ENCODE measurements at regions of chr22 and their contacts with region 1.

Region 1: DNA sequence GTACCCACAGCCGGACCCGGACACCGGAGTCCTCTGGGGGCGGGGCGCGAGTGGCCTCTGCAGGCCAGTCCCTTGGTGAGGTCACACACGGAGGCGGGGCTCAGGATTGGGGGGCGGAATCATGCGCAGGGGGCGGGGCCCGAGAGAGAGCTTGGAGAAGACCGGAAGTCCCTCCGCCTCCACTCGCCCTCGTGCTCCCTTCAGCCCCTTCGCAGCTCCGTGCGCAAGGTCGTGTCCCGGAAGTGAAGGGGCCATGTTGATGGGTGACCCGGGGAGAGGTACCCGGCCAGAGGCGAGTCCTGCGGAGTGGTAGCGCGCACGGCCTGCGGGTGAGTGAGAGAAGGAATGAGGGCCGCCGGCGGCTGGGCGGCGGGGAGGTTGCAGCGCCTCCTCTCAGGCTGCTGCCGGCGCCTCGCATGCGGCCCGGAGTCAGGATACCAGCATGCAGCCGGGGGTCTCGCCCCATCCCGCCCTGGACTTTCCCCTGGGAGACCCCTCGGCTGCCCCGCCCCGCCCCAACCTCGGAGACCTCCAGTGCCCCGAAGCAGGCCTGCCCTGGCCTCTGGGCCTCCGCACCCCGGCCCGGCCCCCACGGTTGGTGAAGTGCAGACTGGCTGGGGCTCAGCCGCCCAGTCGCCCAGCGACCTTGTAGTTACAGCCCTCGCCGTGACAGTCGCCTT is at the start of gene MIEF1:
- DNase-seq: peak; percentile 98
- CTCF ChIP-seq: no peak

Region 2: DNA sequence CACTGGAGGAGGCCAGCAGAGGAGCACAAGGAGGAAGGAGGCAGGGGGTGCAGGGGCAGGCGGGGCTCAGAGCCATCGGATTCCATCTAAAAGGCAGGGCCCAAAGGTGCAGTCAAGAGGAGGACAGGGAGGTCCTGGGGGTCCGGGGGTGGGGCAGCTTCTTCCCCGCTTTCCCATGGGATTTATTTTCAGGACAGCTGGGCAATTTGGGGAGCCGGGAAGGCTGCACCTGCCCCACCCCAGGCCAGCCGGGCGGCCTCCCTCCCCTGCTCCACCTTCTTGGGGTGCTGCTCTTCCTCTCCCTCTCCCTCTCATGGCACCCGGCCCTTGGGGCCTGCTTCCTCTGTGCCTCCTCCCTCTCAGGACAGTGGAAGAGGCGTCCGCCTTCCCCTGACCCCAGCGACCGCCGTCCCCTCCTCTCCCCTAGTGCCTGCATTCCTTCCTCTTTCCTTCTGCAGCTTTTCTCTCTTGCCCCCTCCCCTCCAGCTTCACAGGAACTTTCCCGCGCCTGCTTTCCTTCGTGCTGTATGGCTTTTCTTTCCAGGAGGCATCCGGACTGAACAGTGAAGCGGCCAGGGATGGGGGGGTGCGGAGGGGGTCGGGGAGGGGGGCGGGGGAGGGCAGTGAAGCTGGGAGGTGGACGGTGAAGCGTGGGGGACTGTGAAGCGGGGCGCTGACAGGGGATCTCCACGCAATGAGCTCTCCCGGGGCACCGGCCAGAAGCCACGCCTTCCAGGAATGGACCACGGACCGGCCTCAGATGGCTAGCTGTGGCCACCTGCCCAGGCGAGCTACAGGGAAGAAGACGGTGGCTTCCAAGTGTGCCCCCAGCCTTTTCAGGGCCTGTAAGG is 378.3 kb before region 1 on chr22:
- CTCF ChIA-PET with region 1: no interaction called
- POLR2A ChIA-PET with region 1: no interaction called
- DNase-seq: peak; percentile 25
- CTCF ChIP-seq: no peak

Region 3: GRCh38 chr22:39364714-39365491 is 137.3 kb before region 1 on chr22:
- CTCF ChIA-PET with region 1: no interaction called
- POLR2A ChIA-PET with region 1: no interaction called
- DNase-seq: no peak
- CTCF ChIP-seq: no peak

Region 4: DNA sequence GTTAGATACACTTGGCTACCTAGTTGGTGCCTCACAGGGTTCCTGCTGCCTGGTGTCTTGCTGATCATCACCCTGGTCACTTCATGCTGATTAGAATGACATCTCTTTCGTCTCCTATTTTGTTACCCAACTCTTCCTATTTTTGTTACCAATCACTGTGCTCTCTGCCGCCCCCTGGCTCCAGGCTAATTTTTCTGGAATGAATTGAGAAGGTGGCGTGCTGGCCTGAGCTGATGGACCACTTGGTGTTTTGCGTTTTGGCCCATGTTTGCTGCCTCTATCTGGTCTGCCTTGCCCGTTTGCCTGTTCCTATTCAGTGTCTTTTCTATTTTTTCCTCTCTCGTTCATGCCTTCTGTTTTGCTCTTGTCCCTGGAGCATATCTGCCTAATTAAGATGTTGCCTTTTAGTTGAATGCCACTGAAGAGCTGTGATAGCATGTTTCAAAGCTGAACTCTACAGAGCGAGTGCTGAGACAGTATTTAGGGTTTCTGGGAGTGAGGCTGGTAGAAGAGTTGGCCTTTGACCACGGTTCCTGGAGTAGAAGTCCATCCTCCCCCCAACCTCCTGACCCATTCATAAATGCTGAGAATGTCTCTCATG is 12.2 kb after region 1 on chr22:
- CTCF ChIA-PET with region 1: interaction called, 166 read pairs
- POLR2A ChIA-PET with region 1: interaction called, 16 read pairs
- DNase-seq: no peak
- CTCF ChIP-seq: peak; percentile 77

Region 5: GRCh38 chr22:39520054-39520891 is 18.0 kb after region 1 on chr22 and contains the start of gene ATF4:
- CTCF ChIA-PET with region 1: interaction called, 166 read pairs
- POLR2A ChIA-PET with region 1: interaction called, 16 read pairs
- DNase-seq: peak; percentile 97
- CTCF ChIP-seq: no peak

Region 6: DNA sequence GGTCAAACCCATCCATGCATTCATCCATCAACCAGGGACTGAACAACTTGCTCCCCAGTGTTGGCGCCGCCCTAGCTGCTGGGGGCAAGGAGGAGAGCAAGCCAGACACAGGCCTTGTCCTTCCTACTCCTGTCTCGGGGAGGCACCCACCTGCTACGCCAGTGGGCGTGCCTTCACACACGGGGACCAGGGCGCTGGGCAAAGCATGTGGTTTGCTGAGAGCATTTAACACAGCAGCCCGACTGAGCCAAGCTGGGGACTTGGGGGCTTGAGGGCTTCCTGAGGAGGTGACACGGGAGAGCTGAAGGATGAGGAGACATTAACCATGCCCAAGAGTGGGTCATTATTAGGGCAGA is 98.9 kb after region 1 on chr22:
- CTCF ChIA-PET with region 1: no interaction called
- POLR2A ChIA-PET with region 1: no interaction called
- DNase-seq: no peak
- CTCF ChIP-seq: no peak

Region 7: DNA sequence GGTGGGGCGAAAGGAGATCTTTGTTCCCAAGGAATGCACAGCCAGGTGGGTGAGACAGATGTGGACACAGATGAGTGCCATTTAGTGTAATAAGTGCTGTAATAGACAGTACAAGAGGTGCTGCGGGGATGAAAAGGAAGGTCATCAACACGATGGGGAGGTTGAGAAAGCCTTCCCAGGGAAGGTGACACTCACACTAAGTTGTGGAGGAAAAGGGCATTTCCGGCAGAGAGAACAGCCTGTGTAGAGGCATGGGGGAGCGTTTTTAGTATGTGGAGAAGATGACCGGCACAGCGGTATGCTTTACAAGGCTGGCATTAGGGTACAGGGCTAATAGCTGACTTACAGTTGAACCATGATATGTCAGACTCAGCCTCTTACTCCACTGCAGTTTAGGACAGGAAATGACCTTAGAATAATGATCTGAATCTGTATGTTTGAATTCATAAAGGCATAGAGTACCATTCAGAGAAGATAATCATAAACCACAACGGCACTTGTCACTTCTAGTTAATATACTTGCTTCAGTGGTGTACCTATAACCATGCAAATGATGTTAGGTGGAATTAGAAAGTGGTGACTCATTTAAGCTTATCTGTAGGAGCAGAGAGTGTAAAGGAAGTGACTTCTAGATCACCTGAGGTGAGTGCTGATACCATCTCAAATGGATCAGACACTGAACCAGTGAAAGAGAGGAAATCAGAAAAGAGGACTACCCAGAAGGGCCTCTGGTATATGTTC is 553.1 kb after region 1 on chr22:
- CTCF ChIA-PET with region 1: no interaction called
- POLR2A ChIA-PET with region 1: no interaction called
- DNase-seq: peak; percentile 38
- CTCF ChIP-seq: no peak